ENCODE measurements at regions of chr17 and their contacts with region 1.

Region 1: DNA sequence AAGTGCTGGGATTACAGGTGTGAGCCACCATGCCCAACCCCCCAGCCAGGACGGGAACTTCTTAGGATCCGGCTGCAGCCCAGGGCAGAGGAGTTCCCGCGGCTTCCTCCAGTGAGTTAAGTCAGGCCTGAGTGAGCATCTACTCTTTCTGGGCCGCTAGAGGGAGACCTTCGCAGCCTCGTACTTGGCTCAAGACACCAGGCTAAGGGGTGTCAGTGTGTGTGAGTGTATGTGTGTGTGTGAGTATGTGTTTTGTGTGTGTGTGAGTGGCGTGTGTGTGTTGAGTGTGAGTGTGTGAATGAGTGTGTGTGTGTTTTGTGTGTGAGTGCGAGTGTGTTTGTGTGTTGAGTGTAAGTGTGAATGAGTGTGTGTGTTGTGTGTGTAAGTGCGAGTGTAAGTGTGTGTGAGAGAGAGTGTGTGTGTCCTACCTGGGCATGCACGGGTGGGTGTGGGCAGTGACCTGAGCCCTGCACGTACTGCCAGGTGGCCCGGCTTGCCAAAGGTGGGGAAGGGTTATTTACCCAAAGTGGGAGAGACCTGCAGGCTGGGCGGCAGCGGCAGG is 58.5 kb downstream of the TMEM235 start:
- DNase-seq: peak; percentile 77 to 89 (median 80)
- H3K4me3 ChIP-seq: no peak overlapping the region
- H3K4me3 Mint-ChIP-seq: no peak overlapping the region
- H3K27ac ChIP-seq: no peak overlapping the region
- H3K27ac Mint-ChIP-seq: no peak overlapping the region
- H3K4me1 ChIP-seq: peaks cover 48 to 62% of the 10 kb centered on the region in 2 donors
- H3K4me1 Mint-ChIP-seq: peaks cover 31% of the 10 kb centered on the region
- H3K27me3 ChIP-seq: no peaks in the 10 kb centered on the region
- H3K27me3 Mint-ChIP-seq: peaks cover 0 to 2% (median 0%) of the 10 kb centered on the region in 3 donors
- CTCF ChIP-seq: peak; percentile 74

Region 2: DNA sequence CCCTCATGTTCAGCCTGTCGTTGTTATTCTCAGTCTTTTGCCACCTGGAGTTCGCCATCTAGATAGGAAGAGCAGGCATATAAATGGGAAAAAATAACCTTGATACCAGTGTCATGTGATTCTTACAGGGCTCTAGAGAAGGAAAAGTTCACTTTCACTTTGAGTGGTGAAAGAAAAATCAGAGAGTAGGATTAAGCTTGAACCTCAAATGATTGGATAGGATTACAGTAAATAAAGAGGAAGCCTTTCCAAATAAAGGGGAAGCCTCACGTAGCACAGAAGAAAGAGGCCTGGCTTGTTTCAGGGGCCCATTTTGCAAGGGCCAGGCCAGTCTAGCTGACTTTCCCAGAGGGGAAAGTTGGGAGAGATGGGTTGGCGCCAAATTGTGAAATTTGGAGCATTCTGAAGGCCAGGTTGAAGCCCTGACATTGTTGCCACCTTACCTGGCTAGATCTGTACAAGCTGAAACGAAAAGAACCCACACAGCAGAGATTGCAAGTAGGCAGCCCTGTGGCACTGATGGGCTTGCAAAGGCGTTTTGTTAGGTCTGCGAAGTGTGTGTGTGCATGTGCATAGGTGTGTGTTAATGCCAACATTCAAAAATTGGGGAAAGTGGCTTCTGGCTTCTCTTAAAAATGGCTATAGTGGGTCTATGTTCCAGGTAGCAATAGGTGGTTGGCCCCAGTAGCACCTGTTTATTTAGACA is 200.2 kb before region 1 on chr17:
- intact Hi-C with region 1: no loop called
- DNase-seq: peak; percentile 30 to 41 (median 38)
- H3K4me3 ChIP-seq: peak overlapping the region in 1 of 3 experiments; percentile 37
- H3K4me3 Mint-ChIP-seq: peak overlapping the region; percentile 25 to 75
- H3K27ac ChIP-seq: peak overlapping the region in 1 of 2 donors; percentile 67
- H3K27ac Mint-ChIP-seq: peak overlapping the region; percentile 41 to 88 (median 81)
- H3K4me1 ChIP-seq: peaks cover 9 to 10% of the 10 kb centered on the region in 2 donors
- H3K4me1 Mint-ChIP-seq: peaks cover 11% of the 10 kb centered on the region
- H3K27me3 ChIP-seq: no peaks in the 10 kb centered on the region
- H3K27me3 Mint-ChIP-seq: peaks cover 0 to 2% (median under 1%) of the 10 kb centered on the region in 3 donors
- CTCF ChIP-seq: no peak

Region 3: DNA sequence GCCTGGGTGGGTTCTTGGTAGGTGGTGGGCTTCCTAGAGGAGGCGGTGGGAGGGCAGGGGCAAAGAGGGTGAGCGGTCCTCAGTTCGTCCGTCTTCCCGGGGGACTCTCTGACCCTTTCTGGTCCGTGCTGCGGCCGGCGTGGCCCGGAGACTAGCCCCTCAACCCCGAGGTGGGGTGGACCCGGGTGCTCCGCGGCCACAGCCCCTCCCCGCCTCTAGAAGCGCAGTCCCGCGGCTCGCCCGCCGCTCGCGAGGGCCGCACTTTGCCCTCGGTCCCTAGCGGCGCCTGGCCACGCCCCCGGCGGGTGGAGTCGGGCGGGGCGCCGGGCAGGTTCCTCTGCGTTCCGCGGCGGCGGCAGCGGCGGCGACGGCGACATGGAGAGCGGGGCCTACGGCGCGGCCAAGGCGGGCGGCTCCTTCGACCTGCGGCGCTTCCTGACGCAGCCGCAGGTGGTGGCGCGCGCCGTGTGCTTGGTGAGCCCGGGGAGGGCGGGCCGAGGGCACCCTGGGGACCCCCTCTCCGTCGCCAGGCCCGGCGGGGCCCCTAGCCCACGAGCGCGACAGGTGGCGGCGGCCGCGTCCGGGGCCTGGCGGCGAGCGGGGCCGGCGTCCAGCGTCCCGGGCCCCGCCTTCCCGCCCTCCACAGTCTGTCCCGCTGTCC is 121.5 kb before region 1 on chr17 and contains the start of gene SYNGR2:
- intact Hi-C with region 1: no loop called
- DNase-seq: peak; percentile 73 to 78 (median 76)
- H3K4me3 ChIP-seq: peak within 1 kb of the TSS; percentile 85 to 92 (median 86)
- H3K4me3 Mint-ChIP-seq: peak within 1 kb of the TSS; percentile 84 to 88
- H3K27ac ChIP-seq: peak within 1 kb of the TSS; percentile 27 to 72
- H3K27ac Mint-ChIP-seq: peak within 1 kb of the TSS in 5 of 7 donors; percentile 11 to 82 (median 57)
- H3K4me1 ChIP-seq: peaks cover 48% of the 10 kb centered on the region in 2 donors
- H3K4me1 Mint-ChIP-seq: peaks cover 50% of the 10 kb centered on the region
- H3K27me3 ChIP-seq: no peaks in the 10 kb centered on the region
- H3K27me3 Mint-ChIP-seq: peaks cover 0 to 4% (median 1%) of the 10 kb centered on the region in 3 donors
- CTCF ChIP-seq: no peak
- polyA plus RNA-seq, gene SYNGR2: 270 to 402 (median 350) TPM

Region 4: DNA sequence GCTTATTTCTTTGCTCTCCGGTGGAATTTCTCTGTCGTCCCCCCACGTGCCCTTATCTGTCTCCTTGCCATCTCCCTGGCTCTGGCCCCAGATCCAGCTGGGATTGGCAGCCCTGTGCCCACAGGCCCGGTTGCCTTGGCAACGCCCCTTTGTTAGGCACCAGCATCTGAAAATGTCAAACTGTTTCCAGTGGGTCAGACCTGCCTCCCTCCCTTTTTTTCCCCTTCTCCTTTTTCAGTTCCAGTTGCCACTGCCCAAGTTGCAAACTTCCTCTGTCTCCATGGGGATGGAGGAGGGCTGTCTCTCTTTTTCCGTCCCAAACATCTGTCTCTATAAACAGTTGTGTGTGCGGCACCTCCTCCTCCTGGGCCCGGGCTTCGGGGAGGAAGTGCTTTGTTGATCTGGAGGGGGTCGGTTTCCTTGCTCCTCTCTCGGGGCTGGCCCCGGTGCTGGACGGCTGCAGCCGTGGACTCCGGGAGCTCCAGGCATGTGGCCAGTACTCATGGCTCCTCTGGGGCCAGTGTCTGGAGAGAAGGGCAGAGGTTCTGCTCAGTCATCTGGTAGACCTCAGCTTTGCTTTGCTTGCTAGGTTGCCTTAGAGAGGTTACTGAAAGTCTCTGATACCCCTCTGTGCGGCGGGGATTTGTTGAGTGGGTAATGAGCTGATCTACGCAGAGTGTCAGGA is 34.6 kb after region 1 on chr17:
- intact Hi-C with region 1: loop called in 1 of 2 experiments (anchors 5 kb)
- DNase-seq: peak; percentile 72 to 84 (median 72)
- H3K4me3 ChIP-seq: peak overlapping the region in 1 of 3 experiments; percentile 46
- H3K4me3 Mint-ChIP-seq: peak overlapping the region; percentile 72 to 91
- H3K27ac ChIP-seq: peak overlapping the region; percentile 72 to 73
- H3K27ac Mint-ChIP-seq: peak overlapping the region; percentile 87 to 99 (median 96)
- H3K4me1 ChIP-seq: peaks cover 43 to 53% of the 10 kb centered on the region in 2 donors
- H3K4me1 Mint-ChIP-seq: peaks cover 39% of the 10 kb centered on the region
- H3K27me3 ChIP-seq: no peaks in the 10 kb centered on the region
- H3K27me3 Mint-ChIP-seq: peaks cover 0 to 22% (median 2%) of the 10 kb centered on the region in 3 donors
- CTCF ChIP-seq: no peak

Region 5: DNA sequence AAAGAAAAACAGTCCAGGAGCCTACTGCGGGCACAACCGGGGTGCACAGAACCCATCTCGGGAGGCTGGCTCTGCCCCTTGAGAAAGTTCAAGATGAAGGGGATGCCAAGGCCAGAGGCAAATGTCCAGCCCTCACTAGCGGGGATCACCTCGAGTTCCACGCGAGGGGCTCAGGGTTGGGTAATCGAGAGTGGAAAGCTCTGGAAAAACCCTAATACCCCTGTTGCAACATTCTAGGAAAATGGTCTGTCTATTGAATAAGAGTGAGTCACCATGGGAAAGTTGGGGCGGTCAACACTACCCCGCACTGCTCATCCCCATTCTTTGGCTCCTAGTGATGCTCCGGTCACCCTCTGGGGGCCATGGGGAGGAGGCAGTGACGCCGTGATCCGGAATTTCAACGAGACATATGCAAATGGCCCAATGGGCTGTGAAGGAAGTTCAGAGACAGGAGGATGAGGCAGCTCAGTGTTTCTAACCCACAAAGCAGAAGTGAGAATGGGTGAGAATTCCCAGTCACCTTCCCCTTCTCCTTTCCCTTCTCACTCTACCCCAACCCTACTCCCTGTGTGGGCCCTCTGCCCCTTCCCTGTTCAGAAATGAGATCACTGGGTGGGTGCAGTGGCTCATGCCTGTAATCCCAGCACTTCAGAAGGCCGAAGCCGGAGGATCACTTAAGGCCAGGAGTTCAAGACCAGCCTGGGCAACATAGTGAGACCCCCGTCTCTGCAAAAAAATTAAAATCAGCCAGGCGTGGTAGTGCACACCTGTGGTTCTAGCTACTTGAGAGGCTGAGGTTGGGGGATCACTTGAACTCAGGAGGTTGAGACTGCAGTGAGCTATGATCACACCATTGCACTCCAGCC is 47.6 kb after region 1 on chr17:
- intact Hi-C with region 1: loop called in 1 of 2 experiments (anchors 5 kb)
- DNase-seq: peak; percentile 94 to 100 (median 96)
- H3K4me3 ChIP-seq: peak overlapping the region in 1 of 3 experiments; percentile 35
- H3K4me3 Mint-ChIP-seq: peak overlapping the region; percentile 61 to 70
- H3K27ac ChIP-seq: peak overlapping the region; percentile 82 to 84
- H3K27ac Mint-ChIP-seq: peak overlapping the region; percentile 91 to 98 (median 95)
- H3K4me1 ChIP-seq: peaks cover 66 to 72% of the 10 kb centered on the region in 2 donors
- H3K4me1 Mint-ChIP-seq: peaks cover 59% of the 10 kb centered on the region
- H3K27me3 ChIP-seq: peaks cover 0 to 4% of the 10 kb centered on the region in 2 donors
- H3K27me3 Mint-ChIP-seq: peaks cover 0 to 7% (median 6%) of the 10 kb centered on the region in 3 donors
- CTCF ChIP-seq: no peak

Measured in CD14-positive monocyte (primary cell).